Activated CD8-positive, alpha-beta memory T cell treated with anti-CD3 and anti-CD28 coated beads, Interleukin-2, amount 10 ng/mL, durations not matched to agents 7 days and 5 days (primary cell): ENCODE measurements at regions of chr20 and their contacts with region 1.

Region 1: GRCh38 chr20:5448449-5449118 is 131.8 kb upstream of the PROKR2 start:
- DNase-seq: peak; percentile 60
- ATAC-seq: peak; percentile 42
- H3K4me3 Mint-ChIP-seq: no peak overlapping the region
- H3K27ac Mint-ChIP-seq: no peak overlapping the region
- H3K4me1 Mint-ChIP-seq: no peaks in the 10 kb centered on the region
- H3K27me3 Mint-ChIP-seq: peaks cover 38% of the 10 kb centered on the region

Region 2: DNA sequence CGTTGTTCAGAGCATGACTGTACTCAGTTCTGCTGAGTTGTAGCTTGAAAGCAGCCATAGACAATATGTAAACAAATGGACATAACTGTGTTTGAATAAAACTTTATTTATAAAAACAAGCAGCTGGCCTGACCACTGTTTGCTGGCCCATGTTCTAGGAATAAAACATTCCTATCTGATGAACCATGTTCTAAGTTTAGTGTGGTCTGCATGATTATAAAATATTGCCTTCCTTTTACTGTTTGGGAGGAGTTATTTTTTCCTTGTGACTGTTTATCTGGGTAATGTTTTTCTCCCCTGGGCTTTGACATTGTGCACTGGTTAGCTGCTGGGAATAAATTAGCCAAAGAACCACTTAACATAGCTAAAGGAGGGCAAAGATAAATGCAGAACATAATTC is 266.6 kb before region 1 on chr20:
- CTCF ChIA-PET with region 1: no interaction called
- DNase-seq: no peak
- ATAC-seq: no peak
- H3K4me3 Mint-ChIP-seq: no peak overlapping the region
- H3K27ac Mint-ChIP-seq: peak overlapping the region; percentile 14
- H3K4me1 Mint-ChIP-seq: no peaks in the 10 kb centered on the region
- H3K27me3 Mint-ChIP-seq: no peaks in the 10 kb centered on the region

Region 3: GRCh38 chr20:5402903-5403531 is 45.6 kb before region 1 on chr20:
- CTCF ChIA-PET with region 1: interaction called, 19 read pairs
- DNase-seq: peak; percentile 52
- ATAC-seq: no peak
- H3K4me3 Mint-ChIP-seq: no peak overlapping the region
- H3K27ac Mint-ChIP-seq: no peak overlapping the region
- H3K4me1 Mint-ChIP-seq: peaks cover 4% of the 10 kb centered on the region
- H3K27me3 Mint-ChIP-seq: no peaks in the 10 kb centered on the region

Region 4: DNA sequence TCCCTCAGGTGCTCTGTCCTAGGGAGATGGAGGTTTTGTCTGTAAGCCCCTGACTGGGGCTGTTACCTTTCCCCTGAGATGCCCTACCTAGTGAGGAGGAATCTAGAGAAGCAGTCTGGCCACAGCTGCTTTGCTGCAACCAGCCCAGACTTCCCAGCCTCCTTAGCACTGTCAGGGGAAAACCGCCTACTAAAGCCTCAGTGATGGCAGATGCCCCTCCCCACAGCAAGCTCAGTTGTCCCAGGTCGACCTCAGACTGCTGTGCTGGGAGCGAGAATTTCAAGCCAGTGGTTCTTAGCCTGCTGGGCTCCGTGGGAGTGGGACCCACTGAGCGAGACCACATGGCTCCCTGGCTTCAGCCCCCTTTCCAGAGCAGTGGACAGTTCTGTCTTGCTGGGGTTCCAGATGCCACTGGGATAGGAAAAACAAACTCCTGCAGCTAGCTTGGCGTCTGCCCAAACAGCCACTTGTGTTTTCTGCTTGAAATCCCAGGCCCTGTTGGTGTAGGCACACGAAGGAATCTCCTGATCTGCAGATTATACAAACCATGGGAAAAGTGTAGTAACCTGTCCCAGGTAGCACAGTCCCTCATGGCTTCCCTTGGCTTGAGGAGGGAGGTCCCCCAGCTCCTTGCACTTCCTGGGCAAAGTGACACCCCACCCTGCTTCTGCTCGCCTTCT is 14.6 kb after region 1 on chr20:
- CTCF ChIA-PET with region 1: interaction called, 10 read pairs
- DNase-seq: no peak
- ATAC-seq: no peak
- H3K4me3 Mint-ChIP-seq: no peak overlapping the region
- H3K27ac Mint-ChIP-seq: no peak overlapping the region
- H3K4me1 Mint-ChIP-seq: no peaks in the 10 kb centered on the region
- H3K27me3 Mint-ChIP-seq: peaks cover 49% of the 10 kb centered on the region